ENCODE measurements at regions of chr22 and their contacts with region 1.

Region 1: DNA sequence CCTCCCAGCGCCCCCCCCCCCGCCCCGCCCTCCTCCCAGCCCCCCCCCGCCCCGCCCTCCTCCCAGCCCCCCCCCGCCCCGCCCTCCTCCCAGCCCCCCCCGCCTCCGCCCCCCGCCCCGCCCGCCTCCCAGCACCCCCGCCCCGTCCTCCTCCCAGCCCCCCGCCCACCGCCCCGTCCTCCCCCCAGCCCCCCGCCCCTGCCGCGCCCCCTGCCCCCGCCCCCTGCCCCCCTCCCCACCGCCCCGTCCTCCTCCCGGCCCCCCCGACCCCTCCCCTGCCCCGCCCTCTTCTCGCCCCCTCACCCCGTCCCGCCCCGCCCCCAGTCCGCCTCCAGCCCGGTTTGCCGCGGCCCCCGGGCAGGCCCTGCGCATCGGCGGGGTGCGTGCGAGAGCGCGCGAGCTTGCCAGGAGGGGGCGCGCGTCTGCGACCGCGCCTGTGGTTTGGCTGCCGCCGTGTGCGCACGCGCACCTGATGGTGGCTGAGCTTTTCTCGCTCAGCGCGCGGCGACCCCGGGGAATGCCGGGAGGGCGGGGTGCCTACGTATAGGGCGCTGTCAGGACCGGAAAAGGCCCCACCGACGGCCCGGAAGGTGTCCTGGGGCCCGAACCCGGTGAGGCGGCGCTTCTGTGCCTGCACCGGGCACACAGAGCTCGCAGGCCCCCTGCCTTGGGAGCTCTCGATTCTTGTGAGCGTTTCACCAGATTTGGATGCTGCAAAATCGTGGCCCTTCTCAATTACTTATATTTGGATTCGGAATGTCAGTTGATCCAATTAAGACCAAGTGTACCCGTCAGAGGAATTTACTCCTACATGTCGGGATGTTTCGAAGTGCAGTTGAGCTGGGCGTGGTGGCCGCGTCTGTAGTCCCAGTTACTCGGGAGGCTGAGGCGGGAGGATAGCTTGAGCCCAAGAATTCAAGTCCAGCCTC is 501 bp upstream of the TTLL12 start:
- DNase-seq: peak; percentile 98
- H3K4me3 Mint-ChIP-seq: peak overlapping the region; percentile 87
- H3K27ac Mint-ChIP-seq: peak overlapping the region; percentile 95
- H3K4me1 Mint-ChIP-seq: peaks cover 23% of the 10 kb centered on the region
- H3K27me3 Mint-ChIP-seq: no peaks in the 10 kb centered on the region

Region 2: DNA sequence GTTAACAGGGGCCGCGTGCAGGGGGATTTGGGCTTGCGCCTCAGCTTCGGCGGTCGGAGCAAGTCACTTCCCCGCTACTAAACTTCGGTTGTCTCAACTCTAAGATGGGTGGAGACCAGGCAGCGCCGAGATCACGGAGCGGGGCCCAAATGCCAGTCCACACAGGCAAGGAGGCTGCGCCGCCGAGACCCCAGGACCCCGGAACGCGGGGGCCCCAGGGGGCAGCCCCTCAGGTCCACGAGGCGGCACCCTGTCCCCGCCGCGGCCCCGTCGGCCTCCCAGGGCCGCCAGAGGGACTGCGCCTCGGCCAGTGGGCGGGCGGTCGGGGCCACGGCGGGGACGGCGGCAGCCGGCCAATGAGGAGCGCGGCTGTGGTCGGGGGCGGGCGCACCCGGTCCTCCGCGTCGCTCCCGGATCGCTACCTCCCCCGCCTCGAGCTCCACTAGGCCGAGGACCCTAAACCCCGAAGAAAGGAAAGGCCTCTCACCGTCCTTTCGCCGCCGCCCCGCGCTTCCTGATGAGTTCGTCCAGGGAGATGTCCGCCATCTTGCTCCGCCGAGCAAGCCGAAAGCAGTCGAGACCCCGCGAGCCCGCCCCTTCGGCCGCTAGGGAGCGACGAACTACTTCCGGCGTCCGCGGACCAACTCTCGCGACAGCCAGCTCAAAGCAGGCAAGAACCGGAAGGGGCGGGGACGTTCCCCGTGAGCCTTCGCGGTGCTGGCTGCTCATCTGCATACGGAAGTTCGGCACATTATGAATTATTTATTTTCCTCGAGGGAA is 572.9 kb before region 1 on chr22 and contains the start of gene POLDIP3:
- CTCF ChIA-PET with region 1: no interaction called
- intact Hi-C with region 1: loop called (anchors 2 kb)
- DNase-seq: peak; percentile 99
- H3K4me3 Mint-ChIP-seq: peak within 1 kb of the TSS; percentile 91
- H3K27ac Mint-ChIP-seq: peak within 1 kb of the TSS; percentile 100
- H3K4me1 Mint-ChIP-seq: peaks cover 50% of the 10 kb centered on the region
- H3K27me3 Mint-ChIP-seq: no peaks in the 10 kb centered on the region
- total RNA-seq, gene POLDIP3: 83.7 to 93.8 TPM

Region 3: DNA sequence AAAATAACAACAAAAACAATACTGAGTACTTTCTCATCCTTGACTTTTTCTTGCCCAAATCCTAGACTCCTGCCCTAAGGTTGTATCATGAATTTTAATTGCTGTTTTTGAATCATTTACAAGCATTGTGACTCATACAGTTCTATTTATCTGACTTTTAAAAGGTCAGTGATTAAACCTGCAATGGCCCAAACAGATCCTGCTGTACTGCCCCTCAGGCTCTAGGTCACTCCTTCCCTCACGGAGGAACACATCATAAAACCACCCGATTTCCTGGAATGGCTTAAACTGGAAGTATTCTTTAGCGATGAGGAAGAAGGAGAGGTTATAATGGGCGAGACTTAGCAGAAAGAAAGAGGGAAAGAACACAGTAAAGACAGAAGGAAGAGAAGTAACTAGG is 342.7 kb before region 1 on chr22:
- CTCF ChIA-PET with region 1: no interaction called
- intact Hi-C with region 1: no loop called
- DNase-seq: no peak
- H3K4me3 Mint-ChIP-seq: no peak overlapping the region
- H3K27ac Mint-ChIP-seq: no peak overlapping the region
- H3K4me1 Mint-ChIP-seq: peaks cover 14% of the 10 kb centered on the region
- H3K27me3 Mint-ChIP-seq: no peaks in the 10 kb centered on the region

Region 4: GRCh38 chr22:43088979-43089717 is 98.3 kb before region 1 on chr22 and contains the start of gene TTLL1:
- CTCF ChIA-PET with region 1: no interaction called
- intact Hi-C with region 1: loop called (anchors 1 kb)
- DNase-seq: peak; percentile 93
- H3K4me3 Mint-ChIP-seq: peak within 1 kb of the TSS; percentile 88
- H3K27ac Mint-ChIP-seq: peak within 1 kb of the TSS; percentile 86
- H3K4me1 Mint-ChIP-seq: peaks cover 14% of the 10 kb centered on the region
- H3K27me3 Mint-ChIP-seq: no peaks in the 10 kb centered on the region
- total RNA-seq, gene TTLL1: 7.4 TPM

Region 5: DNA sequence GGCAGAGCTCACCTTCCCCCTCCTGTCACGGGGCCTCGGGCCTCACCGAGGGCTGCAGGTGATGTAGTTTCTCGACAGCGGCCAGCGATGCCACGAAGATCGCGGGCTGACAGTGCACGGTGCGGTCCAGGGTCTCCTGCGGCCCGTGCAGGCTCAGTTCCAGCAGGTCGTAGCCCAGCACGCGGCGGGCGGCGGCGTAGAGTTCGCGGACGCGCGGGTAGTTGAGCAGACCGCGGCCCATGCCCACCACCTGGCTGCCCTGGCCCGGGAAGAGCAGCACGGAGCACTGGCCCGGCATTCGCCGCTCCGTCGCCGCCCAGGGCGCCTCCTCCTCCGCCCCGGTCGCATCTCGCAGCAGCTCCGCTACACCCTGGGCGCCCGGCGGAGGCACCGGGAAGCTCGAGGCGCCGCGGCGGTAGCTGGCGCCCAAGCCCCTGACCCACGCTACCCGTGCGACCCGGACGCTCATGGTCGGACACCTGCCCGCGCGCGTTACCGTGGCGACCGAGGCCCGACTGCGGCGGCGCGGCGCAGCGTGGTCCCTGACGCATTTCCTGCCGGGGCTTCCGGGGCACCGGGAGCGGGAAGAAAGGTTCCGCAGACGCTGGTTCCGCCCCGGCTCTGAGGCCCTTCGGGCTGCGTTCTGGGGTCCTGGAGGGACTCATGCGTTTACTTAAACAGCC is 44.4 kb before region 1 on chr22 and contains the start of gene MCAT:
- CTCF ChIA-PET with region 1: interaction called, 5 read pairs
- intact Hi-C with region 1: loop called (anchors 2 kb)
- DNase-seq: peak; percentile 80
- H3K4me3 Mint-ChIP-seq: peak within 1 kb of the TSS; percentile 84
- H3K27ac Mint-ChIP-seq: peak within 1 kb of the TSS; percentile 86
- H3K4me1 Mint-ChIP-seq: peaks cover 31% of the 10 kb centered on the region
- H3K27me3 Mint-ChIP-seq: no peaks in the 10 kb centered on the region
- total RNA-seq, gene MCAT: 10.0 to 10.5 TPM

Region 6: DNA sequence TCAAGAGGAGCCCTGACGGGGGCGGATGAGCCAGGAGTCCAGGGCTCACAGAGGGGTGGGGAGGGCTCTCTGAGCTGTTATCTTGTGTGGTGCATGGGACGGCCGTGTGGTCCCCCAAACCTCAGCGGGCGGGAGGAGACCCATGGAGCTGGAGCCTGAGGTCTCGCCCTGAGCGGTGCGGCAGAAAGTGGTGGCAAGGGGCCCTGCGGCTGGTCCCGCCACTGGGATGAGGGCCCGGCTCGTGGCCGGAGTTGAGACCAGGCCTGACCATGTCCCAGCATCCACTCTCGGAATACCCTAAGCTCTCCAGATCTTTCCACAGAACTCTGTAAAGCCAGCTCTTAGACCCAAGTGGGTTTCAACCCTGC is 22.1 kb after region 1 on chr22:
- CTCF ChIA-PET with region 1: no interaction called
- intact Hi-C with region 1: no loop called
- DNase-seq: no peak
- H3K4me3 Mint-ChIP-seq: no peak overlapping the region
- H3K27ac Mint-ChIP-seq: no peak overlapping the region
- H3K4me1 Mint-ChIP-seq: peaks cover 8% of the 10 kb centered on the region
- H3K27me3 Mint-ChIP-seq: no peaks in the 10 kb centered on the region

Region 7: GRCh38 chr22:43263645-43264514 is 76.4 kb after region 1 on chr22:
- CTCF ChIA-PET with region 1: no interaction called
- intact Hi-C with region 1: loop called (anchors 5 kb)
- DNase-seq: peak; percentile 96
- H3K4me3 Mint-ChIP-seq: peak overlapping the region; percentile 49
- H3K27ac Mint-ChIP-seq: peak overlapping the region; percentile 72
- H3K4me1 Mint-ChIP-seq: peaks cover 18% of the 10 kb centered on the region
- H3K27me3 Mint-ChIP-seq: no peaks in the 10 kb centered on the region